ENCODE measurements at regions of chr10 and their contacts with region 1.

Region 1: DNA sequence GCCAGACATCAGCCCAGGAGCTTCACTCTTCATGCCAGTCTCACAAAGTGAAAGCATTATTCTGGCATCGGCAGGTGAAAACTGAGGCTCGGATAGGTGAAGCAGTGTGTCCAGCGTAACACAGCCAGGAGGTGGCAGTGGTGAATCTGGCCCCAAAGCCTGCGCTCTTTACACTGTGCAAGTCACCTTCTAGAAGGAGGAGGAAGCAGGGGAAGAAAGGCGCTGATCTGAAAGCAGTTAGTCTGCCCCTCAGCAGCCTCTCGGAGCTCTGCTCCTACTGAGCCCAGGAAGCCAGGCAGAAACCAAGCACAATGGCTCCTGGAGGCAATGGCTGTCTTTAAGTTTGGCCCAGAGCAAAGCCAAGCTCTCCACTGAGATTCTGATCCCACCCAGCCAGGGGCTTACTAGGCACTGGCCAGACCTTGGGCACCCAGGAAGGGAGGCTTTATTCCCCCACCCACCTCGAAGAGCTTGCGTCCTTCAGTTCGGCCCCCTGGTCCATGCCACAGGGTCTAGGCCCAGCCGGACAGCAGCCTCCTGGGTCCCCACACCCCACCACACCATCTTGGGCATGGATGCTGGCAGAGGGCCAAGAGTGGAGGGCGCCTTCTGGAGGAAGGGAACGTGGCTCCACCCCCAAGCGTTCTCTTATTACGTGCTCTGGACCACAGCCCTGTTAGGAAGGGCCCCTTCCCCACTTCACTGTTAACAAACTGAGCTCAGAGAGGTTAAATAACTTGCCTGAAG is 104.5 kb downstream of the GRID1 start:
- DNase-seq: no peak
- H3K4me3 ChIP-seq: no peak overlapping the region
- H3K27ac ChIP-seq: no peak overlapping the region
- H3K4me1 ChIP-seq: peaks cover 0 to 53% of the 10 kb centered on the region in 2 experiments; a peak in 2 of 4 replicates
- H3K27me3 ChIP-seq: no peaks in the 10 kb centered on the region
- CTCF ChIP-seq: no peak
- EP300 ChIP-seq: no peak
- RAD21 ChIP-seq: peak; percentile 63

Region 2: GRCh38 chr10:86312701-86313516 is 50.8 kb after region 1 on chr10:
- CTCF ChIA-PET with region 1: interaction called, 10 read pairs
- POLR2A ChIA-PET with region 1: no interaction called
- DNase-seq: no peak
- H3K4me3 ChIP-seq: no peak overlapping the region
- H3K27ac ChIP-seq: no peak overlapping the region
- H3K4me1 ChIP-seq: peaks cover 0 to 37% of the 10 kb centered on the region in 2 experiments; a peak in 1 of 4 replicates
- H3K27me3 ChIP-seq: no peaks in the 10 kb centered on the region
- CTCF ChIP-seq: no peak
- EP300 ChIP-seq: no peak
- RAD21 ChIP-seq: no peak

Region 3: DNA sequence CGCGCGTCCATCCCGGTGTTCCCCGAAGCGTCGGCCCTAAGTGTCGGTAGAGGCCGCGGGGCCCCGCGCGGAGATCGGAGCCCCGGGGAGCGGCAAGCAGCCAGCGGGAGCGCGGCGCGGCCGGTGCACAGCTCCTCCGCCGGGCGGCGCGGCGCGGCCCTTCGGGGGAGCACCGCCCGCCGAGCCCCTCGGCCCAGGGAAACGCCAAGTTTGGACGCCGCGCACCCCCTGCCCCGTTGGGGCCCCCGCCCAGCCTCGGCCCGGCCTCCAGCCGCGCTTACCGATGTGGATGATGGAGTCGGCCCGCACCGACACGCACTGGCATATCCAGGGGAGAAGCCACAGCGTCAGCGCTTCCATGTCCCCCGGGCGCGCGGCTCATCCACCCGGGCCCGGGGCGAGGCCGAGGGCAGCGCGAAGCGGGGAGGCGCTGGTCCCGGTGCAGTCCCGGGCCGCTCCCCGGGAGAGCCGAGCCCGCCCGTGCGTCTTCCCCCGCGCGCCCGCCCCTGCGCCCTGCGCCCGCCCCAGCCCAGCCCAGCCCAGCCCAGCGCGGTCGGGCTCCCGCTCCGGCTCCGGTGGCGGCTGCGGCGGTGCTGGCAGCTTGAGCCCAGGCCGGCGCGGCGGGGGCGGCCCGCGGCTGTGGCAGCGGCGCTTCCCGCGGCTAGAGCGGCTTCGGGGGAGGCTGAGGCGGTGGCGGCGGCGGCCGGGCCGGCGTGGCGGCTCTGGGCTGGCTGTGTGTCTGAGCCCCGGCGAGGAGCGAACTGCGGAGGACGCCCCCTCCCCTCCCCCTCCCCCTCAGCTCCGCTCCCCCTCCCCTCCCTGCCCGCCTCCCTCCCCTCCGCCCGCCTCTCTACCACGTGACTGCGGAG is 104.2 kb after region 1 on chr10 and contains the start of gene GRID1:
- CTCF ChIA-PET with region 1: interaction called, 10 read pairs
- POLR2A ChIA-PET with region 1: no interaction called
- DNase-seq: peak; percentile 98
- H3K4me3 ChIP-seq: peak within 1 kb of the TSS; percentile 49 to 51; a peak in 3 of 4 replicates
- H3K27ac ChIP-seq: no peak within 1 kb of the TSS
- H3K4me1 ChIP-seq: peaks cover 0 to 15% of the 10 kb centered on the region in 2 experiments; a peak in 1 of 4 replicates
- H3K27me3 ChIP-seq: peaks cover 28% of the 10 kb centered on the region
- CTCF ChIP-seq: no peak
- EP300 ChIP-seq: no peak
- RAD21 ChIP-seq: no peak
- polyA plus RNA-seq, gene GRID1: 0.13 and 0.24 TPM in 2 replicates

Measured in SK-N-SH (cell line).